ENCODE measurements at regions of chr5 and their contacts with region 1.

Region 1: DNA sequence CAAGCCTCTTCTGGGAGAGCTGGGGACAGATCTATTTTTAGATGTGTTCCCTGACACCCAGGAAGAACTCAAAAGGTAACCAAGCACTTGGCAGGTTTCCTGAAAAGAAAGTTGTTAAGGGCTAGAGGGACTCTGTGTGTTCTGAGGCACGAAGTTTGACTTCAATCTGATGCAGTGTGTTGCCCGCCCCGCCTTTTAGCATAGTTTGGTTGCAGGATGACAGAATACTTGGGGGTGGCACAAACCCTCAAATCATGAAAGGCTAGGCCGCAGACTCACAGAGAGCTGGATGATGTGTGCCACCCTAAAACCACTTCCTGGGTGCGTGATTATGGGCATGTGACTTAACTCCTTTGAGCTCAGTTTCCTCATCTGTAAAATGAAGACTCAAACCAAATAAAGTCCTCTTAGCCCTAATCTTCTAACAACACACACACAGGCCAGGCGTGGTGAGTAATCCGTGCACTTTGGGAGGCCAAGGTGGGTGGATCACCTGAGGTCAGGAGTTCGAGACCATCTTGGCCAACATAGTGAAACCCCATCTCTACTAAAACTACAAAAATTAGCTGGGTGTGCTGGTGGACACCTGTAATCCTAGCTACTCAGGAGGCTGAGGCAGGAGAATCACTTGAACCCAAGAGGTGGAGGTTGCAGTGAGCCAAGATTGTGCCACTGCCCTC is 12.8 kb upstream of the NDFIP1 start:
- DNase-seq: peak; percentile 72
- H3K4me3 Mint-ChIP-seq: peak overlapping the region; percentile 14
- H3K27ac Mint-ChIP-seq: peak overlapping the region; percentile 88
- H3K4me1 Mint-ChIP-seq: peaks cover 44% of the 10 kb centered on the region
- H3K27me3 Mint-ChIP-seq: no peaks in the 10 kb centered on the region

Region 2: GRCh38 chr5:142073362-142073988 is 22.3 kb before region 1 on chr5:
- intact Hi-C with region 1: loop called (anchors 2 kb)
- DNase-seq: no peak
- H3K4me3 Mint-ChIP-seq: no peak overlapping the region
- H3K27ac Mint-ChIP-seq: peak overlapping the region; percentile 96
- H3K4me1 Mint-ChIP-seq: peaks cover 42% of the 10 kb centered on the region
- H3K27me3 Mint-ChIP-seq: no peaks in the 10 kb centered on the region

Region 3: DNA sequence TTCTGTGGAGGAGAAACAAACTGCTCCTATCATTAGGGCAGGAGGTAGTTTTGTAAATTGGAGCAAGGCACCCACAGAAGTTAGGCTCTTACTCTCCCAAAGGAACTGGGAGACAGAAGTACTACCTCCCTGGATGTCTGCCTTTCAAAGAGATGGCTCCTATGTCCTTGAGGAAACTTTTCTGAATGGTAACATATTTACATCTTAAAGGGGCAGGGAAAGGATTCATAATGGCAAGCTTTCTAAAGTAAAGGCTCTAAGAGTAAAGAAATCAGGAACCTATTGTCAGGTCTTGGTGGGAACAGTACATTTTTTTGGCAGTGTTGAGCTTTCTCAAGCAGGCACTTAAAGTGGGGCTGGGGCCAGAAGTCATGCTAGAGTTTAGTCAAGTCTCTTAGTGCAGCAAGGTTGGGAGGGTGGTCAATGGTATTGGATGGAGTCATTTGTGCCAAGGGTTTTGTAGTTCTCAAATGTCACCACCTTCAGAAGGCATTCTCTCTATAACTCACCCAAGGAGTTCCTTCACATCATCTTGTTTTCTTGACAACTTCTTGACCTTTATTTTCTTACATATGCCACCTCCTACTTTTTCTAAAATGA is 13.5 kb before region 1 on chr5:
- intact Hi-C with region 1: loop called (anchors 1 kb)
- DNase-seq: no peak
- H3K4me3 Mint-ChIP-seq: no peak overlapping the region
- H3K27ac Mint-ChIP-seq: peak overlapping the region; percentile 76
- H3K4me1 Mint-ChIP-seq: peaks cover 32% of the 10 kb centered on the region
- H3K27me3 Mint-ChIP-seq: no peaks in the 10 kb centered on the region

Region 4: GRCh38 chr5:142356716-142357473 is 261.1 kb after region 1 on chr5:
- intact Hi-C with region 1: loop called (anchors 10 kb)
- DNase-seq: peak; percentile 87
- H3K4me3 Mint-ChIP-seq: peak overlapping the region; percentile 73
- H3K27ac Mint-ChIP-seq: peak overlapping the region; percentile 90
- H3K4me1 Mint-ChIP-seq: peaks cover 34% of the 10 kb centered on the region
- H3K27me3 Mint-ChIP-seq: peaks cover 9% of the 10 kb centered on the region